Activated naive CD8-positive, alpha-beta T cell treated with anti-CD3 and anti-CD28 coated beads, Interleukin-2, amount 10 ng/mL, durations not matched to agents 7 days and 5 days (primary cell): ENCODE measurements at regions of chr17 and their contacts with region 1.

Region 1: DNA sequence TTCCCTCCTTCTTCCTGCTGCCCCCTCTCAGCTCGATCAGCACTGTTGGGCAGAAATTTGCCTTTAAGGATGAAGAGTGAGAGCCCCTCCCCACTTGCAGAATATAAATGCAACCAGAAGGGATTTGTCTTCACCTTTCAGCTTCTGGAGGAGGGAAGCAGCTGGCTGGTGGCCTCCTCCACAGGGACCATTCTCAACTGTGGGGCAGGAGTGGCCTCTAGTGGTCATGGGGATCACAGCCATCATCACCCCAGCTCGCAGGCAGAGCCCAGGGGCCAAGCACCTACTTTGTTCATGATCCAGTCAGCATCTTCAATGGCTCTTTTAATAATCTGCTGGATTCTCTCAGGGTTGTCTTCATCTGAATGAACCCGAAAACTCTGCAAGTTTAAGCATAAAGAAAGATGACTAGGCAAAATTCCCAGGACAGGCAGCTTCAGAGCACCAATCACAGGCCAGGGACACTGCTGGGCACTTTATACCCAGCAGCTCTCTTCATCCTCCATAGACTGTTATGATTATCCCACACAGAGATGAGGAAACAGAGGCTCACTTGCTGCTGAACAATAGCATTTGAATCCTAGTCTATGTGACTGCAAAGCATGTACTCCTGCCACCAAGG is 13.1 kb downstream of the LYRM9 start:
- DNase-seq: peak; percentile 78
- ATAC-seq: peak; percentile 76
- H3K4me3 Mint-ChIP-seq: no peak overlapping the region
- H3K27ac Mint-ChIP-seq: peak overlapping the region; percentile 43
- H3K4me1 Mint-ChIP-seq: peaks cover 27% of the 10 kb centered on the region
- H3K27me3 Mint-ChIP-seq: no peaks in the 10 kb centered on the region

Region 2: GRCh38 chr17:27853121-27853520 is 27.0 kb before region 1 on chr17:
- POLR2A ChIA-PET with region 1: no interaction called
- DNase-seq: no peak
- ATAC-seq: no peak
- H3K4me3 Mint-ChIP-seq: no peak overlapping the region
- H3K27ac Mint-ChIP-seq: no peak overlapping the region
- H3K4me1 Mint-ChIP-seq: peaks cover 16% of the 10 kb centered on the region
- H3K27me3 Mint-ChIP-seq: peaks cover 4% of the 10 kb centered on the region

Region 3: GRCh38 chr17:27892866-27893769 is 13.0 kb after region 1 on chr17 and contains the start of gene LYRM9:
- POLR2A ChIA-PET with region 1: interaction called, 11 read pairs
- DNase-seq: peak; percentile 99
- ATAC-seq: peak; percentile 99
- H3K4me3 Mint-ChIP-seq: peak within 1 kb of the TSS; percentile 82
- H3K27ac Mint-ChIP-seq: peak within 1 kb of the TSS; percentile 65
- H3K4me1 Mint-ChIP-seq: peaks cover 21% of the 10 kb centered on the region
- H3K27me3 Mint-ChIP-seq: peaks cover 33% of the 10 kb centered on the region
- total RNA-seq, gene LYRM9: 8.0 to 8.3 TPM